HEK293T (cell line): ENCODE measurements at regions of chr7 and their contacts with region 1.

Region 1: DNA sequence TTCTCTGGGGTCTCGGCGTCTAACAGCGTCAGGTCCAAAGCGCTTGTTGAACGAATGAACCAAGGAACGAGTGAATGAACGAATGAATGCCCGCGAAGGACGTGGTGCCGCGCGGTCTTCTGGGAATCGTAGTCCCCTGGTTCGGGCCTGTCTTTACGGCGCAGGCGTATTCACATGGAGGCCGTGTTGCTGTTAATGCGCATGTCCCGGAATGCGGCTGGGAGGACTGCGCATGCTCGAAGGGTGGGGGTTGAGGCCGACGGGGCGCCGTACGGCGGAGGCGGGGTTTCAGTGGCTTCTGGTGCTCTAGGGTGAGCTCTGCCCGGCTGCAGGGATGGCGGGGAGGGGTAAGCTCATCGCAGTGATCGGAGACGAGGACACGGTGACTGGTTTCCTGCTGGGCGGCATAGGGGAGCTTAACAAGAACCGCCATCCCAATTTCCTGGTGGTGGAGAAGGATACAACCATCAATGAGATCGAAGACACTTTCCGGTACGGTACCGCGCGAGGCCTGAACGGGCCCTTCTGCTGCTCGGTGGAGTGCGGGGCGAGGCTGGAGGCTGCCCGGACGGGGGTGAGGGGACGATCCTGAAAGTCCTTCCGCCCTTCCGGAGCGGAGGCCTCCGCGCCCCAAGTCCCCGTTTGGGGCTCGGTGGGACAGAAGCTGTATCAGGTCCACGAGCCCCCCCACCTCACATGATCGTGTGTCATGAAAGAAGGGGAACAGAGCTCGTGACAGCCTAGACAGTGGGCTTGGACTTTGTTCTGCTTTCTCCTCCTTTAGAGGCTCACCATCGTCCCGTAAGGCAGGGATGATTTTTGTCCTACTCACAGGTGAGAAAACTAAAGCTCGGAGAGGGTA is at the start of gene ATP6V1F:
- DNase-seq: peak; percentile 98

Region 2: GRCh38 chr7:128799451-128799850 is 63.4 kb before region 1 on chr7:
- CTCF ChIA-PET with region 1: no interaction called
- POLR2A ChIA-PET with region 1: no interaction called
- DNase-seq: no peak

Region 3: DNA sequence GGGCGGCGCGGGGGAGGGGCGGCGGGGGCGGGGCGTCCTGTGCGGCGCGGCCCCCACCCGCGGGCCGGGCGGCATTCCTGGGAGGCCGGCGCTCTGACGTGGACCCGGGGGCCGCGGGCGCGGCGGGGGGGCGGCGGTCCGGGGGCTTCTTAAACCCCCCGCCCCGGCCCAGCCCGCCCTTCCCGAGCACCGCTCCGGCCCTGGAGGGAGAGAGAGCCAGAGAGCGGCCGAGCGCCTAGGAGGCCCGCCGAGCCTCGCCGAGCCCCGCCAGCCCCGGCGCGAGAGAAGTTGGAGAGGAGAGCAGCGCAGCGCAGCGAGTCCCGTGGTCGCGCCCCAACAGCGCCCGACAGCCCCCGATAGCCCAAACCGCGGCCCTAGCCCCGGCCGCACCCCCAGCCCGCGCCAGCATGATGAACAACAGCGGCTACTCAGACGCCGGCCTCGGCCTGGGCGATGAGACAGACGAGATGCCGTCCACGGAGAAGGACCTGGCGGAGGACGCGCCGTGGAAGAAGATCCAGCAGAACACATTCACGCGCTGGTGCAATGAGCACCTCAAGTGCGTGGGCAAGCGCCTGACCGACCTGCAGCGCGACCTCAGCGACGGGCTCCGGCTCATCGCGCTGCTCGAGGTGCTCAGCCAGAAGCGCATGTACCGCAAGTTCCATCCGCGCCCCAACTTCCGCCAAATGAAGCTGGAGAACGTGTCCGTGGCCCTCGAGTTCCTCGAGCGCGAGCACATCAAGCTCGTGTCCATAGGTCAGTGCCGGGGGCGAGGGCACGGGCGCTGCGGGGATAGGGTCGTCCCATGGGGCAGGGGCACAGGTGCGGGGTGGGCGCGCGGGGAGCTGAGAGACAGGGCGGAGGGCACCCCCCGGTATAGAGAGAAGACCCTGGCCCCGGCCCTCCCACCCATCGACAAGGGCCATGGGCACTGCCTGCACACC is 32.3 kb before region 1 on chr7 and contains the start of gene FLNC:
- CTCF ChIA-PET with region 1: interaction called, 3 read pairs
- POLR2A ChIA-PET with region 1: interaction called, 32 read pairs
- DNase-seq: peak; percentile 45

Region 4: GRCh38 chr7:128883622-128884501 is 21.1 kb after region 1 on chr7:
- CTCF ChIA-PET with region 1: interaction called, 13 read pairs
- POLR2A ChIA-PET with region 1: interaction called, 20 read pairs
- DNase-seq: peak; percentile 92

Region 5: GRCh38 chr7:128940494-128941322 is 77.9 kb after region 1 on chr7:
- CTCF ChIA-PET with region 1: no interaction called
- POLR2A ChIA-PET with region 1: no interaction called
- DNase-seq: no peak